Naive thymus-derived CD8-positive, alpha-beta T cell (primary cell): ENCODE measurements at regions of chr7 and their contacts with region 1.

Region 1: GRCh38 chr7:123557398-123558288 is at the start of gene NDUFA5:
- DNase-seq: peak; percentile 81 to 99 (median 98)
- ATAC-seq: peak; percentile 91 to 98
- H3K4me3 Mint-ChIP-seq: no peak within 1 kb of the TSS
- H3K27ac Mint-ChIP-seq: no peak within 1 kb of the TSS
- H3K4me1 Mint-ChIP-seq: peaks cover 10 to 13% (median 11%) of the 10 kb centered on the region in 4 donors
- H3K27me3 Mint-ChIP-seq: peaks cover 0 to 5% (median 2%) of the 10 kb centered on the region in 5 donors
- polyA plus RNA-seq, gene NDUFA5: 65.0 to 92.8 (median 87.5) TPM

Region 2: GRCh38 chr7:123534383-123535260 is 23.0 kb before region 1 on chr7 and contains the start of gene IQUB:
- POLR2A ChIA-PET with region 1: interaction called, 37 read pairs
- DNase-seq: peak; percentile 82 to 96 (median 88)
- ATAC-seq: peak; percentile 74 to 79
- H3K4me3 Mint-ChIP-seq: peak within 1 kb of the TSS; percentile 72 to 96 (median 90)
- H3K27ac Mint-ChIP-seq: peak within 1 kb of the TSS; percentile 34 to 97 (median 88)
- H3K4me1 Mint-ChIP-seq: peaks cover 10 to 34% (median 24%) of the 10 kb centered on the region in 4 donors
- H3K27me3 Mint-ChIP-seq: peaks cover 7 to 15% (median 8%) of the 10 kb centered on the region in 5 donors
- polyA plus RNA-seq, gene IQUB: 0.08 TPM in 1 of 3 donors, not detected in the others

Region 3: DNA sequence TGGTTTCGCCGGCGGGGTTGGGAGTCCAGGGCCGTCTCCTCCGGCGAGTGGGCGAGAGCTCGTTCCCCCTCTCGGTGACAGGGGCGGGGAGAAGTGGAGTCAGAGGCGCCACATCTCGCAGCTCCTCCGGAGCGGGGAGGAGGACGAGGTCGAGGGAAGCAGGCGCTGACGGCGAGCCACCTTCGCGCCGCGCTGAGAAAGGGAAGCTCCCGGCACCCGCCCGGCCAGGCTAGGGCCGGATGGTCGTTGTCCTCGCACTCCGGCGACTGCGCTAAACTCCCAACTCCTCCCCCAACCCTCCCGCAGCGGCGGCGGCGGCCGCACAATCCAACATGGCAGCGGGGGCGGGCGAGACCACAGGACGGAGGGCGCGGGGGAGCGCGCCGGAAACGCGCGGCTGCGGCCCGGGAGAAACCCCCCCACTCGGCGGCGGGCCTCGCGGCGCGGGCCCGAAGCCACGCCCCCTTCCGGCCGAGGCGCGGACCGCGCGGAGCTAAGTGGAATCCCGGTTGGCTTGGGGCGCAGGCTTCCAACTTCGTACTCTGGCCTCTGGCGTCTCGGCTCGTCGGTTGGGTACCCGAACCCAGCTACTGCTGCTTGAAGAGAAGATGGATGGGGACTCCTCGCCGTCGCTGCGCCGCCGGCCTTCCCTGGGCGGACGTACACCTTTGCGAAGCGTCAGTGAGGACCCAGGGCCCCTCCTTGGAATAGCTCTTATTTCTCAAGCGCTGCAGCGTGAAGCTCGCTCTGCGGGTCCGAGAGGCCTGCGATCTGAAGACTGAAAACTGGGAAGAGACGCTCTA is 191.3 kb after region 1 on chr7 and contains the start of gene WASL:
- POLR2A ChIA-PET with region 1: interaction called, 32 read pairs
- DNase-seq: peak; percentile 76 to 92 (median 88)
- ATAC-seq: peak; percentile 74 to 80
- H3K4me3 Mint-ChIP-seq: peak within 1 kb of the TSS; percentile 87 to 98 (median 95)
- H3K27ac Mint-ChIP-seq: peak within 1 kb of the TSS; percentile 89 to 97 (median 96)
- H3K4me1 Mint-ChIP-seq: peaks cover 35 to 71% (median 62%) of the 10 kb centered on the region in 4 donors
- H3K27me3 Mint-ChIP-seq: no peaks in the 10 kb centered on the region
- polyA plus RNA-seq, gene WASL: 2.5 to 3.0 (median 2.9) TPM